Body of pancreas (tissue), 4 donors: ENCODE measurements at regions of chr2 and their contacts with region 1.

Region 1: DNA sequence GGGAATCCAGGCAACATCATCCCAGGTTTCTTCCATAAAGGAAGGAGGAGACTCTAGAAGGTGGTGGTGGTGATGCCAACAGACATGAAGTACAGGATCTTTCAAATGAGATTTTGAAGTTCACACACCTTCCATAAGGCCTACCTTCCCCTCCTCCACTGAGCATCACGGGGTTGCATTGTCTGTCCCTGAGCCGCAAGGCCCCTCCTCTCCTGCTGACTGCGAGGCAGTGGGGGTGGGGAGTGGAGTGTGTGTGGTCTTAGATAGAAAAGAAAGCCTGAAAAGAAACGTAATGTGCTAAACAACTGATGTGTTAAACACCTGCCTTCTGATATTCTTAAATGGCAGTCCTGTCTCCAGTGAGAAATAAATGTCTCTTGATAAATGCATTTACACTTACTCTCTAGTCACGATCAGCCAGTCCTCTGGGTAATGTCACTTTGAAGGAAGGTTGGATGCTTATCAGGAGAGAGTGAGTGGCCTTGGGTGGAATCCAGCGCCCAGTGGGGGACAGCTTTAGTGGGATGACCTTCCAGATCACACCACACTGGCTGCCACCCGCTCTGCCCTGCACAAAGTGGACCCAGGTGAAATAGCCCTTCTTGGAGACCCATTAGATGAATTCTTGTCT is 5.5 kb upstream of the SCYGR5 start:
- DNase-seq: no peak
- ATAC-seq: no peak
- H3K4me3 ChIP-seq: no peak overlapping the region
- H3K27ac ChIP-seq: no peak overlapping the region
- H3K4me1 ChIP-seq: no peaks in the 10 kb centered on the region
- H3K27me3 ChIP-seq: no peaks in the 10 kb centered on the region
- CTCF ChIP-seq: no peak
- POLR2A ChIP-seq: no peak

Region 2: GRCh38 chr2:227759411-227760113 is 98.4 kb after region 1 on chr2:
- intact Hi-C with region 1: loop called (anchors 10 kb)
- DNase-seq: peak in 2 of 4 donors; percentile 6 to 13
- ATAC-seq: peak; percentile 39
- H3K4me3 ChIP-seq: no peak overlapping the region
- H3K27ac ChIP-seq: peak overlapping the region in 2 of 4 donors; percentile 29 to 76
- H3K4me1 ChIP-seq: peaks cover 20% of the 10 kb centered on the region
- H3K27me3 ChIP-seq: no peaks in the 10 kb centered on the region
- CTCF ChIP-seq: no peak
- POLR2A ChIP-seq: no peak